Activated CD4-positive, alpha-beta memory T cell treated with anti-CD3 and anti-CD28 coated beads for 36 hours (primary cell): ENCODE measurements at regions of chr9 and their contacts with region 1.

Region 1: DNA sequence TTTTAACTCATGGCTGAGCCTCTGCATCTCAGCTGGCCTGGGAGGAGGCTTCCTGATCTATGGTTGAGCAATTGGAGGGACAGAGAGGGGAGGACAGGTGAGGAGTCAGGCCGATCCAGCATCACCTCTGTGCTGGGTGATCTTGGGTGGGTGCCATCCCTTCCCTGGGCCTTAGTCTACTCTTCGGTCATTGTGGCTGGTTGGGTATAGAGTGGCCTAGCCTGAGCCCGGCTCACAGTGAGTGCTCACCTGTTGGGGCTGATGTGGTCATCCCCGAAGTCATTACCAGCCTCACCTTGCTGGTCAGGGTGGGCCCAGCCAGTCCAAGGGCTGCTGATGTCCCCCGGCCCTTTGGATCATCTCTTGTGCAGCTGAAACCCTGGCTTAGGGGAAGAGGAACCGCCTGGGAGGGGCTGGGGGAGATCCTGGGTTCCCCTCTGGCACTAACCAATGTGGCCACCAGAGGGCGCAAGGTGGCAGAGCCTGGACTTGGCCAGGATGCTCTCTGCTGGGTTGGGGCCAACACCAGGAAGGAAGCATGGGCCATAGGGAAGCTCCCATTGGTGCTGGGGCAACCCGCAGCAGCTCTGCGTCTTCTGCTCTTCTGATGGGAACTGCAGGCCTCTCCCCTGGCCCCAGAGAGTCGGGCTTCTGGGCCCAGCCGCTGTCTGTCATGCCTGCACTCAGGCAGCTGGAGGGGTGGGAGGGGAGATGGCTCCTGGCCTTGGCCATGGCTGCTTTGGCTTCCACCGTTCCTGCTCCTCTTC is 17.3 kb upstream of the ODF2 start:
- DNase-seq: peak; percentile 89
- H3K4me3 Mint-ChIP-seq: no peak overlapping the region
- H3K27ac Mint-ChIP-seq: peak overlapping the region; percentile 5
- H3K4me1 Mint-ChIP-seq: peaks cover 4% of the 10 kb centered on the region
- H3K27me3 Mint-ChIP-seq: no peaks in the 10 kb centered on the region

Region 2: DNA sequence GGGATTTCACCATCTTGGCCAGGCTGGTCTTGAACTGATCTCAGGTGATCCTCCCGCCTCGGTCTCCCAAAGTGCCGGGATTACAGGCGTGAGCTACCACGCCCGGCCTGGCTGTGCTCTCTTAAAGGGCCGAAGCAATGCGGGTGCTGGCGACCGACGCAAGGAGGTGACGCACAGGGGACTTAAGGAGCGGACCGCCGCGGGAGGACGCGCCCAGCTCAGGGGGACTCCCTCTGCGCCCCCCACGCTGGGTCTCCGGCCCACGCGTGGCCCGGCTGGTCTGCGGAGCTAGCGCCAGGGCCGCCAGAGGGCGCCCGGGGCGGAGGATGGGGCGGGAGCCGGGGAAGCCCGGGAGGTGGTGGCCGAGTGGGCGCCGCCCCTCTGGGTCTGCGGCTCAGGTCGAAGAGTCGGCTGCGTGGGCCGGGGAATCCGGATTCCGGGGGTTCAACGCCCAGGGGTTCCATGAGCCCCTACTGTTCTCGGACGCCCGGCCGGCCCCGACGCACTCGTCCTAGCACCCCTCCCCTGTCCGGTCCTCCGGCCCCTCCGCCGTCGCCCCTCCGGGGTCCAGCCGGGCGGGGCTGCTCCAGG is 18.4 kb before region 1 on chr9:
- CTCF ChIA-PET with region 1: interaction called, 23 read pairs
- POLR2A ChIA-PET with region 1: no interaction called
- intact Hi-C with region 1: no loop called
- DNase-seq: peak; percentile 78
- H3K4me3 Mint-ChIP-seq: peak overlapping the region; percentile 69
- H3K27ac Mint-ChIP-seq: no peak overlapping the region
- H3K4me1 Mint-ChIP-seq: peaks cover 9% of the 10 kb centered on the region
- H3K27me3 Mint-ChIP-seq: peaks cover 28% of the 10 kb centered on the region

Region 3: GRCh38 chr9:128448746-128449145 is 10.2 kb after region 1 on chr9:
- CTCF ChIA-PET with region 1: interaction called, 24 read pairs
- POLR2A ChIA-PET with region 1: no interaction called
- intact Hi-C with region 1: no loop called
- DNase-seq: no peak
- H3K4me3 Mint-ChIP-seq: no peak overlapping the region
- H3K27ac Mint-ChIP-seq: no peak overlapping the region
- H3K4me1 Mint-ChIP-seq: no peaks in the 10 kb centered on the region
- H3K27me3 Mint-ChIP-seq: no peaks in the 10 kb centered on the region